ENCODE measurements at regions of chr21 and their contacts with region 1.

Region 1: GRCh38 chr21:15729674-15730483 is at the start of gene USP25:
- DNase-seq: peak; percentile 92 to 95
- ATAC-seq: peak; percentile 97 to 100 (median 98)
- H3K4me3 ChIP-seq: peak within 1 kb of the TSS; percentile 58 to 93 (median 82)
- H3K27ac ChIP-seq: peak within 1 kb of the TSS; percentile 86 to 98 (median 94)
- H3K4me1 ChIP-seq: peaks cover 0 to 44% (median 23%) of the 10 kb centered on the region in 9 donors
- H3K27me3 ChIP-seq: no peaks in the 10 kb centered on the region
- CTCF ChIP-seq: peak in 2 of 9 donors; percentile 6 to 9
- total RNA-seq, gene USP25: 42.9 to 57.7 (median 46.5) TPM

Region 2: GRCh38 chr21:14382835-14383594 is 1346.9 kb before region 1 on chr21 and contains the start of gene HSPA13:
- intact Hi-C with region 1: loop called in 2 of 10 experiments (anchors 10 kb)
- DNase-seq: peak; percentile 99 to 100
- ATAC-seq: peak; percentile 99 to 100 (median 100)
- H3K4me3 ChIP-seq: peak within 1 kb of the TSS; percentile 47 to 92 (median 80)
- H3K27ac ChIP-seq: peak within 1 kb of the TSS; percentile 5 to 94 (median 90)
- H3K4me1 ChIP-seq: peaks cover 0 to 38% (median 27%) of the 10 kb centered on the region in 9 donors
- H3K27me3 ChIP-seq: no peaks in the 10 kb centered on the region
- CTCF ChIP-seq: no peak
- total RNA-seq, gene HSPA13: 10.6 to 24.0 (median 15.9) TPM

Region 3: GRCh38 chr21:15768045-15768601 is 38.2 kb after region 1 on chr21:
- intact Hi-C with region 1: no loop called
- DNase-seq: no peak
- ATAC-seq: no peak
- H3K4me3 ChIP-seq: no peak overlapping the region
- H3K27ac ChIP-seq: no peak overlapping the region
- H3K4me1 ChIP-seq: peaks cover 0 to 55% (median 34%) of the 10 kb centered on the region in 9 donors
- H3K27me3 ChIP-seq: no peaks in the 10 kb centered on the region
- CTCF ChIP-seq: no peak

Region 4: DNA sequence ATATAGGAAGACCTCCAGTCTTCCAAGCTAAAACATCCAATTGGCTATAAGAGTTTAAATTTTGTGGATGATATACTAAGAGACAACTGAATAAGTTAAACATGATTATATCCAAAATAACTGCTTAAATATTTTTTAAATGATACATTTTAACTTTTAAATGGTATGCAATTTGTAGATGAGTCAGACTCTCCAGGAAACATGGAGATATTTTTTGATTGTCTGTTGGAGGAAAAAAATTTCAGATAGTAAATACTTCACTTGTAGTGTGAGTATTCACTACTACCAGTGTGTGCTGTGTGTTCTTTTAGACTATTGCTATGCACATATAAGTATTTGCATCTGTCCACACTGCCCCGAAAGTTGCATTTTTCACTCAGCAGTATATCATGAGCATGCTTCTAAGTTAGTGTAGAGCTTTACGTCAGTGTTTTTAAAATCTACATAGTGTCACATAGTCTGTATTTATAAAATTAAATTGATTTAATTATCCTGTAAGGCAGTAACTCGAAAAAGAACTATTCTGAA is 91.0 kb after region 1 on chr21:
- intact Hi-C with region 1: loop called in 7 of 10 experiments (anchors 2 to 10 kb)
- DNase-seq: no peak
- ATAC-seq: no peak
- H3K4me3 ChIP-seq: no peak overlapping the region
- H3K27ac ChIP-seq: no peak overlapping the region
- H3K4me1 ChIP-seq: peaks cover 0 to 22% (median 3%) of the 10 kb centered on the region in 9 donors
- H3K27me3 ChIP-seq: no peaks in the 10 kb centered on the region
- CTCF ChIP-seq: no peak

Region 5: DNA sequence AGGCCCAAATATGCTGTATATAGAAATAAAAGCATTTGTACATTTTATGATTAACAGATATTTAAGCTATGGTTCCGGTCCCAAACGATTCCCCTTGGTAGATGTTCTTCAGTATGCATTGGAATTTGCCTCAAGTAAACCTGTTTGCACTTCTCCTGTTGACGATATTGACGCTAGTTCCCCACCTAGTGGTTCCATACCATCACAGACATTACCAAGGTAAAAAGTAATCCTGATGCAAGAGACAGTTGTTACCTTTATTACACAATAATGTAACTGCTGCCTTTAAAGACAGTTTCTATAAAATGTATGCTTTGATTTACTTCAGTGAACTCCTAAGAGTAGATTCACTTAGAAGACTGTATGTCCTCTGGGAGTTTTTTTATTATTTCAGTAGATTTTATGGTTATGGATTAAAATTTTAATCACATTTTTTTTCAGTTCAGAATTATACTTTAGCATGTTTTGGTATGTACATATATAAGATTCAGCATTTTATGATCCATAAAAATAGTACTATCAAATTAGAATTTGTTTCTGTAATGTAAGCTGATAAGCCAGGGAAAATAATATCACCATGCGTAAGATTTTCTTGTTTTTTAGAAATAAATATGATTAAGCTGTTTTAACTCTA is 96.4 kb after region 1 on chr21:
- intact Hi-C with region 1: loop called in 7 of 10 experiments (anchors 2 to 10 kb)
- DNase-seq: peak in 1 of 2 donors; percentile 16
- ATAC-seq: peak in 6 of 8 donors; percentile 38 to 84 (median 78)
- H3K4me3 ChIP-seq: no peak overlapping the region
- H3K27ac ChIP-seq: peak overlapping the region in 8 of 10 donors; percentile 4 to 80 (median 57)
- H3K4me1 ChIP-seq: peaks cover 0 to 34% (median 7%) of the 10 kb centered on the region in 9 donors
- H3K27me3 ChIP-seq: no peaks in the 10 kb centered on the region
- CTCF ChIP-seq: peak; percentile 13 to 68 (median 57)